ENCODE measurements at regions of chr6 and their contacts with region 1.

Region 1: DNA sequence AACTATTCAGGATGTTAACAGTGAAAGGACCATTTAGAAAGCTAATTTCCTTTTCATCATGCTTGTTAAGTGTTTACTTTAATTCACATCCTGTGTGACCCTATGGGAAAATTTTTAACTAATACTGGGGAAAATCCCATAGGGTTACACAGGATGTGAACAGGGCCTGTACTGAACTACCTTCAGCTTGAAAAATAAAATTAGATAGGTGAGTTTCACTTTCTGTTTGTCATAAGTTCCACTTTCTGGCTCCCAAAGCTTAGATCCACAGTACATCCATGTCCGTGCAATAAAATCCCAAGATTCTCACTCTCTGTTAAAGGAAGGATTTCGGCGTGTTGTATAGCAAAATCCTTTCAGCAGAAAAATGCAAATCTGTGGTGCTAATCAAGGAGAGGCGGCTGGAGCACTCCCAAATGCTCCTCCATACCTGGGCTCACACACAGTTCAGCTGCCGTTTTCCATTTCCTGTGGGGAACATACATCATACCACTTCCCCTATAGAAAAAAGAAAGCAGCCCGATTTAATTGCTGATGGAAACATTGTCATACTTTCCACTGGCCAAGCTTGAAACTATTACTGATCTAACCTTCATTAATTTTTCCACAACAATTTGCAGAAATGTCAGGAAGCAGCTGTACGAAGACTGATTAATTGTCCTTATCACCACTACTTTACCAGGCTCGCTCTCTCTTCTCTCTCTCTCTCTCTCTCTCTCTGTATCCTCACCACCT is 125.2 kb downstream of the HIVEP2 start:
- DNase-seq: peak; percentile 86
- H3K4me3 Mint-ChIP-seq: peak overlapping the region; percentile 88
- H3K27ac Mint-ChIP-seq: peak overlapping the region; percentile 94
- H3K4me1 Mint-ChIP-seq: peaks cover 63% of the 10 kb centered on the region
- H3K27me3 Mint-ChIP-seq: peaks cover 2% of the 10 kb centered on the region

Region 2: DNA sequence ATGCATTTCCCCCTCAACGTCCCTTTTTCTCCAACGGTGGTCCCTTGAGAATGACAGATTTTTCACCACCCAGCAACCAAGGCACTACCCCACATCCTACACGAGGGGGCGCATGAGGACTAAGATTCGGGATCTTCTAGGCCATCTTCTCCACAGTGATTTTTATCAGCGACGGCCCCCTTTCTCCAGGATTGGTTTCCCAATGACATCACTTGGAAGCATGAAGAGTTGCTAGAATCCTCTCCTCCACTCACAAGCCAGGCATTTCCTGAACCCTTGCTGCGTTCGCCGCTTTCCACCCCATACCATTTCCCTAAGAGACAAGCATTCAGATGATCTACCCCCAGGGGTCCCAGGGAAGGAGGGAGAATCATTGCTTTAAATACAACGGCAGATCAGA is 126.8 kb before region 1 on chr6:
- intact Hi-C with region 1: loop called (anchors 1 kb)
- DNase-seq: peak; percentile 88
- H3K4me3 Mint-ChIP-seq: no peak overlapping the region
- H3K27ac Mint-ChIP-seq: peak overlapping the region; percentile 2
- H3K4me1 Mint-ChIP-seq: peaks cover 15% of the 10 kb centered on the region
- H3K27me3 Mint-ChIP-seq: no peaks in the 10 kb centered on the region

Region 3: GRCh38 chr6:142802124-142802523 is 17.6 kb before region 1 on chr6:
- intact Hi-C with region 1: loop called (anchors 1 kb)
- DNase-seq: no peak
- H3K4me3 Mint-ChIP-seq: peak overlapping the region; percentile 52
- H3K27ac Mint-ChIP-seq: peak overlapping the region; percentile 82
- H3K4me1 Mint-ChIP-seq: peaks cover 54% of the 10 kb centered on the region
- H3K27me3 Mint-ChIP-seq: no peaks in the 10 kb centered on the region

Region 4: DNA sequence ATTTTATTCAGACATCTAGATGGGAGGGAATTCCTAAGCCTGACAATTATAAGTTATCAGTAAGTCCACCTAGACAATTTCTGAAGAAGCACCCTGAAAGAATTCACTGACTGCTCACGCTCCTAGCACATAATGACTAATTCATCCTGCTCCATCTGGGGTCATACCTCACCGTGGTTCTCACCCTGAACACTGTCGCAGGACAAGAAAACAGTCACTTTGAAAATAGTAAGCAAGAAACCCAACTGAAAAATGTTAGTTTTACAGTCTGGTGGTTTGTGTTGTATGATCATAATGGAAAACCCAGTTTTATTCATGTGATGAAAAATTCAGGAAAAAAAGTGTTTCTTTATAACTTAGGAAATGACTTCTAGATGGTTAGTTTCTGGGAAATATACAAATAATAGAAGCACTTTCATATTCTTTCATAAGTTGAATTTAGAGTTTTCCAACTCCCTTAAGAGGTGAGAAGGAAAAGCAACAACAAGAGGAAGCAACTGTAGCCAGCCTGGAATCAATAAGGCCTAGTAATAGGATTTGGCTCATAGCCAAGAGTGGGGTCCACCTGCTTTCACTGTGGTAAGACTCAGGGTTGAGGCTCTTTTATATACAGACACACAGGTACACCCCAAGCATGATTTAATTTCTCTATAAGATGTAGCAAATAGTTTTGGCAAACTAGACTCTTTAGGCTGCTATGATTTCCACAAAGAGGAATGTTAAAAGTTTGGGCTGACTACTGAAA is 31.1 kb after region 1 on chr6:
- intact Hi-C with region 1: loop called (anchors 1 kb)
- DNase-seq: peak; percentile 74
- H3K4me3 Mint-ChIP-seq: peak overlapping the region; percentile 70
- H3K27ac Mint-ChIP-seq: peak overlapping the region; percentile 87
- H3K4me1 Mint-ChIP-seq: peaks cover 83% of the 10 kb centered on the region
- H3K27me3 Mint-ChIP-seq: no peaks in the 10 kb centered on the region

Region 5: DNA sequence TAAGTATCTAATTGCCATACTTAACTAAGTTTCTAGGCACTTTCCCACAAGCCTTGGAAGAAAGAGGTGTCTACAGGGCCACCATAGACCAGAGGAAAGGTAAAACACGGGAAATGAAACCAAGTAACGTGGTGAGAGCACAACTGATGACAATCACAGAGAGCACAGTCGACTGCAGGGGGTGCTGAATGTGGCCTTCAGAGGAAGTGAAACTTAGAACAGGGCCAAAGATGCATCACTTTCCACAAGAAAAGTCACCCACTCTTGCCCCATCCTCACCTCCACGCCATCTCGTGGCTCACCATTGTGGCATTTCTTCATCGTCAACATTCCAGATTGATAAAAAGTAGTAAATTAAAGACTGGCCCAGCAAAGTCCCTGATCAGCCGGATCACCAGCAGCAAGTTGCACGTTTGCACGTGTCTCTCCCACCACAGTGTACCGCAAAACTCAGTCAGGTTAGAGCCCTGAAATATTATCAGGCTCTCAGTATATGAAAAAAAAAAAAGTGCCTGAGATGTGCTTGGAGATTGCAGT is 93.8 kb after region 1 on chr6:
- intact Hi-C with region 1: loop called (anchors 1 kb)
- DNase-seq: peak; percentile 92
- H3K4me3 Mint-ChIP-seq: peak overlapping the region; percentile 82
- H3K27ac Mint-ChIP-seq: peak overlapping the region; percentile 94
- H3K4me1 Mint-ChIP-seq: peaks cover 62% of the 10 kb centered on the region
- H3K27me3 Mint-ChIP-seq: no peaks in the 10 kb centered on the region

Region 6: DNA sequence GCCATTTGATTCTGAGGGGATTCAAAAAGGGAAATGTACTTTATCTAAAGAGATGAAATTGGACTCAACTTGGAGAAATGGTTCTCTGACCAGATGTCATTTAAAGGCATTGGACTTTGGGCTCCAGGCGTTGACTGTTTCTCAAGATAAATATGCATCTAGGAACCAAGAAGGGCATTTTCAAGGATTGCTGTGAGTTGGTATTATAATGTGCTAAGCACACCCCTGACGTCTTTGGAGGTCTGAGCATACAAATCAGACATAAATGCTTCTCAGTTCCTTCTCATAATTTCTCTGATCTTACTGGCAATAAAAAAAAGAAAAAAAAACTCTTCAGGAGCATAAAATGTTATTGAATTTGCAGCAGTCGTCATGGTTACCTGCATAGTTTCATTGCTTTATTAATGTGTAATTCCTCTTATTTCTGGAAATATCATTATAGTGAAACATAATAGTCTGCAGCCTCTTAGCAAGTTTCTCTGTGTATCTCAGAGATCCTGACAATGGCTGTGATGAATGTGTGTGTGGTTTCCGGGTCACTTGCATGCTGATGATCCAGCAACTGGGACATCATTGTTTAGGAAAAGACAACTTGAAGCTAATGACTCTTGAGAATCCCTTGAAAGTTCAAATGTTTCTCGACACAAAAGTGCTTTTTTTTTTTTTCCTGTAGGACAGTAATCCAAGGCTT is 376.9 kb after region 1 on chr6:
- intact Hi-C with region 1: no loop called
- DNase-seq: no peak
- H3K4me3 Mint-ChIP-seq: no peak overlapping the region
- H3K27ac Mint-ChIP-seq: no peak overlapping the region
- H3K4me1 Mint-ChIP-seq: peaks cover 2% of the 10 kb centered on the region
- H3K27me3 Mint-ChIP-seq: no peaks in the 10 kb centered on the region